Activated CD4-positive, alpha-beta T cell treated with anti-CD3 and anti-CD28 coated beads for 36 hours (primary cell): ENCODE measurements at regions of chr12 and their contacts with region 1.

Region 1: GRCh38 chr12:54032627-54033100 is at the start of gene HOXC5:
- DNase-seq: peak; percentile 81
- ATAC-seq: peak; percentile 36
- H3K4me3 Mint-ChIP-seq: peak within 1 kb of the TSS; percentile 28
- H3K27ac Mint-ChIP-seq: no peak within 1 kb of the TSS
- H3K4me1 Mint-ChIP-seq: peaks cover 25% of the 10 kb centered on the region
- H3K27me3 Mint-ChIP-seq: peaks cover 64% of the 10 kb centered on the region
- total RNA-seq, gene HOXC5: not detected

Region 2: GRCh38 chr12:54017878-54018467 is 14.7 kb before region 1 on chr12:
- CTCF ChIA-PET with region 1: interaction called, 23 read pairs
- POLR2A ChIA-PET with region 1: no interaction called
- intact Hi-C with region 1: no loop called
- DNase-seq: peak; percentile 85
- ATAC-seq: peak; percentile 88
- H3K4me3 Mint-ChIP-seq: peak overlapping the region; percentile 65
- H3K27ac Mint-ChIP-seq: no peak overlapping the region
- H3K4me1 Mint-ChIP-seq: peaks cover 17% of the 10 kb centered on the region
- H3K27me3 Mint-ChIP-seq: peaks cover 58% of the 10 kb centered on the region

Region 3: DNA sequence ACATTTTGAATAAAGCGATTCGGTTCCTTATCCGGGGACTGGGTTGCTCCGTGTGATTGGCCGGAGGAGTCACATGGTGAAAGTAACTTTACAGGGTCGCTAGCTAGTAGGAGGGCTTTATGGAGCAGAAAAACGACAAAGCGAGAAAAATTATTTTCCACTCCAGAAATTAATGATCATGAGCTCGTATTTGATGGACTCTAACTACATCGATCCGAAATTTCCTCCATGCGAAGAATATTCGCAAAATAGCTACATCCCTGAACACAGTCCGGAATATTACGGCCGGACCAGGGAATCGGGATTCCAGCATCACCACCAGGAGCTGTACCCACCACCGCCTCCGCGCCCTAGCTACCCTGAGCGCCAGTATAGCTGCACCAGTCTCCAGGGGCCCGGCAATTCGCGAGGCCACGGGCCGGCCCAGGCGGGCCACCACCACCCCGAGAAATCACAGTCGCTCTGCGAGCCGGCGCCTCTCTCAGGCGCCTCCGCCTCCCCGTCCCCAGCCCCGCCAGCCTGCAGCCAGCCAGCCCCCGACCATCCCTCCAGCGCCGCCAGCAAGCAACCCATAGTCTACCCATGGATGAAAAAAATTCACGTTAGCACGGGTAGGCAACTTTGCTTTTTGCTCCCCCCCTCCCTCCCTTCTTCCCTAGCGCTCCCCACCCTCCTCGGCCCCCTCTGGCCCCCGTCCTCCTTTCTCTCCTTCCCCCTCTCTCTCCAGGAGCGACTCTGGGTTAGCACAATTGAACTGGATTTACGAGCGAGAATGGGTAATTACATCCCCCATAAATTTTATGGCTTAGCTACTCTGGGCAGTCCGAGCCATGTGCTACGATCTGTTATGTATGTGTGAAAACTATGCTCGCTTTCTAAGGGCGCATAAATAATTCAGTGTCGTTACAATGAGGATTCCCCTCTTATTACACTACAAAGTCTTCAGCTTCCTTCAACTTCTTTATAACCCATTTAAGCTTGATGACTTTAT is 21.4 kb after region 1 on chr12 and contains the start of gene HOXC4:
- CTCF ChIA-PET with region 1: interaction called, 15 read pairs
- POLR2A ChIA-PET with region 1: no interaction called
- intact Hi-C with region 1: no loop called
- DNase-seq: no peak
- ATAC-seq: no peak
- H3K4me3 Mint-ChIP-seq: peak within 1 kb of the TSS; percentile 0
- H3K27ac Mint-ChIP-seq: no peak within 1 kb of the TSS
- H3K4me1 Mint-ChIP-seq: peaks cover 21% of the 10 kb centered on the region
- H3K27me3 Mint-ChIP-seq: peaks cover 81% of the 10 kb centered on the region
- total RNA-seq, gene HOXC4: not detected

Region 4: GRCh38 chr12:54138222-54138621 is 105.6 kb after region 1 on chr12:
- CTCF ChIA-PET with region 1: interaction called, 4 read pairs
- POLR2A ChIA-PET with region 1: no interaction called
- intact Hi-C with region 1: loop called in 1 of 2 experiments (anchors 2 kb)
- DNase-seq: no peak
- ATAC-seq: no peak
- H3K4me3 Mint-ChIP-seq: no peak overlapping the region
- H3K27ac Mint-ChIP-seq: no peak overlapping the region
- H3K4me1 Mint-ChIP-seq: no peaks in the 10 kb centered on the region
- H3K27me3 Mint-ChIP-seq: peaks cover 46% of the 10 kb centered on the region

Region 5: GRCh38 chr12:54191550-54192022 is 158.9 kb after region 1 on chr12:
- CTCF ChIA-PET with region 1: interaction called, 72 read pairs
- POLR2A ChIA-PET with region 1: no interaction called
- intact Hi-C with region 1: loop called (anchors 1 kb)
- DNase-seq: peak; percentile 87
- ATAC-seq: peak; percentile 60
- H3K4me3 Mint-ChIP-seq: no peak overlapping the region
- H3K27ac Mint-ChIP-seq: no peak overlapping the region
- H3K4me1 Mint-ChIP-seq: peaks cover 17% of the 10 kb centered on the region
- H3K27me3 Mint-ChIP-seq: peaks cover 35% of the 10 kb centered on the region

Region 6: DNA sequence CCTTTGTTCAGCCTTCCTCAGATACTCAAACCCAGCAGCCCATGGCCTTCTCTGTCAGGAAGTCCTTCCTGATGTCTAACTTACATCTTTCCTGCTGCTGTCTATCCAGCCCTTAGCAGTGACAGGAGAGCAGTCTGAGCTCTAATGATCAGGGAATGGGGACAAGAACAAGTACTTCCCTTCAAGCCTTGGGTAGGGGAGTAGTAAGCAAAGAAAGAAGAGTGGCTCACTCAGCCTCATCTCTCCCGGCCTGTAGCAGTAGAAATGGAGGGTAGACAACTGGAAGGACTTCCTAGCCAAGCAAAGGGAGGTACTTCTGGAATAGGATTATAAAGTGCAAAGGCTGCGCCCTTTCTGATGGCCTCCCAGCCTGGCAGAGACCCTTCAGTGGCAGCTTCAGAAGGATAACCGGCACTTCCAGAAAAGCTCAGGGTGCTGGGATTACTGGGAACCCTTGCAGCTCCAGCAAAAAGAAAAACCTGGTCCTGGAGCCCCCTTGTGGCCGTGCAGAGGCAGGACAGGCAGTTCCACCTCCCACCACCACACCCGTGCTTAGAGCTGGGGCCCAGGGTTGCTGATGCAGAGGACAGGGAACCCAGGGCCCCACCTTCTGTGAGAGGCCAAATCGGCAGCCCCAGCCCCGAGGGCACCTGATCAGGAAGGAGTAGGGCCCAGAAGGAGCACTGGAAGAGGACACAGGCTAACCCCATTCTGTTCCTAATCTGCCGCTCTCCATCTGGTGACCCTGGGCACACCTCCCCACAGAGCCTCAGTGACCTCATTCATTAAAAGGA is 168.5 kb after region 1 on chr12:
- CTCF ChIA-PET with region 1: interaction called, 56 read pairs
- POLR2A ChIA-PET with region 1: no interaction called
- intact Hi-C with region 1: loop called in 1 of 2 experiments (anchors 2 kb)
- DNase-seq: peak; percentile 83
- ATAC-seq: peak; percentile 95
- H3K4me3 Mint-ChIP-seq: no peak overlapping the region
- H3K27ac Mint-ChIP-seq: no peak overlapping the region
- H3K4me1 Mint-ChIP-seq: no peaks in the 10 kb centered on the region
- H3K27me3 Mint-ChIP-seq: peaks cover 44% of the 10 kb centered on the region

Region 7: DNA sequence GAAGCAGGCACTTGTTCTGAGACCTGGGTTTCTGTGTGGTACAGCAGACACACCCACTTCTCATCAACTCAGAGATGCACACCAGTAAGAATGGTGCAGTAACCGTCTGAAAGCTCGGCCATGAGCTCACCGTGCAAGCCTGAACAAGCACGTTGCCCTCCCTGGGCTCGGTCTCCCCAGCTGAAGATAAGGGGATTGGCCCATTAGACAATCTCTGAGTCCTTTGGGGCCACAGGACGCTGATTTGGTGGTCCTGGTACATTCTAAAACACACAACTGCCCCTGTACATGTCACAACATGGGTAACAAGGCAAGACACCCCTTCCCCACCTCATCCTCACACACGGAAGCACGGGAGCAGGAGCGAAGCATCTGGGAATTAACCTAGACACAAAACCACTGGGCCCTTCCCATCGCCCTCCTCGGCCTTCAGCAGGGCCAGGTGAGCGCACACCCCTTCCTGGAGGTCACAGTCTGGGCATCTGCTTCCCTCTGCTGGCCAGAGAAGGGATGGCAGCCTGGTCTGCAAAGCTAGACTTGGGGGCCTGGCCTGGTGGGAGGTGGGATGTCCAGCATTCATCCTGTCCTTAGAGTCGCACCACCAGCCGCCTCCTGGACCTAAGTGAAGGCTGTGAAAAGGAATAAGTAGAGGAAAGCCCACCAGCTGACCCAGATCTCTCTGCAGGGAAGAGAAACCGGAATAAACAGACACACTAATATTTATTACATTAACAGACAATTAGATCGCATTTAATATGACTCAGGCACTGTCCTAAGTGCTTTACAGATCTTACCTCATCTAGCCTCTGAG is 175.0 kb after region 1 on chr12:
- CTCF ChIA-PET with region 1: interaction called, 56 read pairs
- POLR2A ChIA-PET with region 1: no interaction called
- intact Hi-C with region 1: no loop called
- DNase-seq: peak; percentile 88
- ATAC-seq: peak; percentile 93
- H3K4me3 Mint-ChIP-seq: no peak overlapping the region
- H3K27ac Mint-ChIP-seq: no peak overlapping the region
- H3K4me1 Mint-ChIP-seq: no peaks in the 10 kb centered on the region
- H3K27me3 Mint-ChIP-seq: peaks cover 25% of the 10 kb centered on the region